ENCODE measurements at regions of chr9 and their contacts with region 1.

Region 1: GRCh38 chr9:21812946-21813568 is 10.6 kb downstream of the MTAP start:
- DNase-seq: peak; percentile 80
- ATAC-seq: peak; percentile 35
- H3K4me3 Mint-ChIP-seq: no peak overlapping the region
- H3K27ac Mint-ChIP-seq: peak overlapping the region; percentile 55
- H3K4me1 Mint-ChIP-seq: peaks cover 53% of the 10 kb centered on the region
- H3K27me3 Mint-ChIP-seq: no peaks in the 10 kb centered on the region

Region 2: DNA sequence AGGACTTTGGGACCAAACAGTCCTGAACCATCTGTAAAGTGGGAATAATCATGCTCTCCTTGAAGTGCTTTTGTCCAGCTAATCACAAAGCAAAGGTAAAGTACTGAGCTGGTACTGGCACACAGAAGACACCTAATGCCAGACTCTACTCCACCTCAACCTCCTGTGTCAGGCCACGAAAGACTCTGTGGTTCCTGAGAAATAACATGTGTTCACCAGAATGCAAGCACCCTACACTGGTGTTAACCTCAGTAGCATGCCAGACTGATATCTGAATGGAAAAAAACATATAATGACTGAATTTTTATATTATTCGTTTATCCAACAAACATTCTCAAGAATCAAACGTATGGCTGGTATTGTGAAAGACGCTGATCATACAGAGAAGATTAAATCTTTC is 233.8 kb before region 1 on chr9:
- CTCF ChIA-PET with region 1: no interaction called
- POLR2A ChIA-PET with region 1: no interaction called
- intact Hi-C with region 1: no loop called
- DNase-seq: peak; percentile 33
- ATAC-seq: peak; percentile 52
- H3K4me3 Mint-ChIP-seq: peak overlapping the region; percentile 43
- H3K27ac Mint-ChIP-seq: peak overlapping the region; percentile 74
- H3K4me1 Mint-ChIP-seq: peaks cover 39% of the 10 kb centered on the region
- H3K27me3 Mint-ChIP-seq: peaks cover 3% of the 10 kb centered on the region

Region 3: DNA sequence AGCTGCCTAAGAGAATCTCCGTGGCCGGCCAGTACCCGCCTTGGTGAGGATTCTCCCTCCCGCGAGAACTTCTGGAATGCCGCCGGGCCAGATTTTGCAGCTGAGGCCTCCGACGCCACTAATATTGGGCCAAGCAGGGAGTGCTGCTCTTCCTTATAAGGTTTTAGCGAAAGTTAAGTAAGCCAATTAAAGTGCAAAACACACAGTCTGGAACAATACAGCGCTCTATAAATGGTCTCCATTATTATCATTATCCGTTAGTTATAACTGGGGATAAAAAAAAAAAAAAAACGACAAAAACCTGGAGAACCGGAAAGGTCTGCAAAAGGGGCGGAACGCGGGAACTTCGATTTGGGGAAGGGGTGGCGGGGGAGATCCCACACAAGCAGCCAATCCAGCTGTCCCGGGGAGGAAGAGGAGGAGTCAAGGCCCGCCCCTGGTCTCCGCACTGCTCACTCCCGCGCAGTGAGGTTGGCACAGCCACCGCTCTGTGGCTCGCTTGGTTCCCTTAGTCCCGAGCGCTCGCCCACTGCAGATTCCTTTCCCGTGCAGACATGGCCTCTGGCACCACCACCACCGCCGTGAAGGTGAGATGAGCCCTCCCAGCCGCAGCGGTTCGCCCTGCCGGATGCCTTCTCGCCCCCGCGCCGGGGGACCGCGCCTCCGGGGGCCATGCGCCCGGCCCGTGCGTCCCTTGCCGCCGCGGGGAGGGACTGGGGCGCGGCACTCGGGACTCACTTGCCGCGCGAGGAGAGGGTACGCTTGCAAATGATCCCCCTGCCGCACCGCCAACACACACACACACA is 10.7 kb before region 1 on chr9 and contains the start of gene MTAP:
- CTCF ChIA-PET with region 1: interaction called, 11 read pairs
- POLR2A ChIA-PET with region 1: no interaction called
- intact Hi-C with region 1: no loop called
- DNase-seq: peak; percentile 85
- ATAC-seq: peak; percentile 89
- H3K4me3 Mint-ChIP-seq: peak within 1 kb of the TSS; percentile 99
- H3K27ac Mint-ChIP-seq: peak within 1 kb of the TSS; percentile 99
- H3K4me1 Mint-ChIP-seq: peaks cover 38% of the 10 kb centered on the region
- H3K27me3 Mint-ChIP-seq: peaks cover 8% of the 10 kb centered on the region
- total RNA-seq, gene MTAP: 59.6 to 77.0 TPM

Region 4: DNA sequence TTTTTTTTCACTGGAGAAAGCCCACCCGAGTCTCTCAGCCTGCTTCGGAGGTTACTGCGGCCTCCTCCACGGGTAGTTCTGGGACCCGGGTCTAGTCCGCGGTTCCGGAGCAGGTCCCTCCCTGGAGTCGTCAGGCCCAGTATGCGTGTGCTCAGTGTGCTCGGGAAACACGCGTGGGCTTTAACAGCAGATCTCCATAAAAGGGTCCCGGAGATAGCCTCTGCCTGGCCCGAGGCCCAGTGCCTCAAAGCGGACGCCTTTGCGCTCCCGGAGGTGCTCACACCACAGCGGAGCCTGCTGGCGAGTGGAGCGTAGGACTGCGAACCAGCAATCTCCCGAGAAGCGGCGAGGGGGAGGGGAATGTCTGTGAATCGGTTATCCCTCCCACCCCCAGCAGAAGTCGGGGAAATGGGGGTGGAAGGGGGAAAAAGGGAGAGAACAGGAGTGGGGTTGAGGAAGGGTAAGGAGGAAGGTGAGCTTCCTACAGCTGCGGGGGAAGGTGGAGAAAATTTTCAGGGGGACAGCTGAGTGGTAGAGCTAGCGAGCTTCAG is 152.4 kb after region 1 on chr9:
- CTCF ChIA-PET with region 1: interaction called, 4 read pairs
- POLR2A ChIA-PET with region 1: no interaction called
- intact Hi-C with region 1: loop called (anchors 1 to 2 kb)
- DNase-seq: peak; percentile 75
- ATAC-seq: peak; percentile 84
- H3K4me3 Mint-ChIP-seq: peak overlapping the region; percentile 53
- H3K27ac Mint-ChIP-seq: peak overlapping the region; percentile 5
- H3K4me1 Mint-ChIP-seq: peaks cover 24% of the 10 kb centered on the region
- H3K27me3 Mint-ChIP-seq: peaks cover 85% of the 10 kb centered on the region

Region 5: GRCh38 chr9:22037954-22038690 is 225.1 kb after region 1 on chr9:
- CTCF ChIA-PET with region 1: interaction called, 40 read pairs
- POLR2A ChIA-PET with region 1: no interaction called
- intact Hi-C with region 1: loop called (anchors 1 kb)
- DNase-seq: no peak
- ATAC-seq: no peak
- H3K4me3 Mint-ChIP-seq: no peak overlapping the region
- H3K27ac Mint-ChIP-seq: no peak overlapping the region
- H3K4me1 Mint-ChIP-seq: peaks cover 5% of the 10 kb centered on the region
- H3K27me3 Mint-ChIP-seq: peaks cover 14% of the 10 kb centered on the region

Region 6: GRCh38 chr9:22079873-22080341 is 266.9 kb after region 1 on chr9:
- CTCF ChIA-PET with region 1: interaction called, 8 read pairs
- POLR2A ChIA-PET with region 1: no interaction called
- intact Hi-C with region 1: loop called in 1 of 2 experiments (anchors 1 kb)
- DNase-seq: peak; percentile 75
- ATAC-seq: peak; percentile 99
- H3K4me3 Mint-ChIP-seq: no peak overlapping the region
- H3K27ac Mint-ChIP-seq: no peak overlapping the region
- H3K4me1 Mint-ChIP-seq: peaks cover 26% of the 10 kb centered on the region
- H3K27me3 Mint-ChIP-seq: peaks cover 61% of the 10 kb centered on the region

Region 7: DNA sequence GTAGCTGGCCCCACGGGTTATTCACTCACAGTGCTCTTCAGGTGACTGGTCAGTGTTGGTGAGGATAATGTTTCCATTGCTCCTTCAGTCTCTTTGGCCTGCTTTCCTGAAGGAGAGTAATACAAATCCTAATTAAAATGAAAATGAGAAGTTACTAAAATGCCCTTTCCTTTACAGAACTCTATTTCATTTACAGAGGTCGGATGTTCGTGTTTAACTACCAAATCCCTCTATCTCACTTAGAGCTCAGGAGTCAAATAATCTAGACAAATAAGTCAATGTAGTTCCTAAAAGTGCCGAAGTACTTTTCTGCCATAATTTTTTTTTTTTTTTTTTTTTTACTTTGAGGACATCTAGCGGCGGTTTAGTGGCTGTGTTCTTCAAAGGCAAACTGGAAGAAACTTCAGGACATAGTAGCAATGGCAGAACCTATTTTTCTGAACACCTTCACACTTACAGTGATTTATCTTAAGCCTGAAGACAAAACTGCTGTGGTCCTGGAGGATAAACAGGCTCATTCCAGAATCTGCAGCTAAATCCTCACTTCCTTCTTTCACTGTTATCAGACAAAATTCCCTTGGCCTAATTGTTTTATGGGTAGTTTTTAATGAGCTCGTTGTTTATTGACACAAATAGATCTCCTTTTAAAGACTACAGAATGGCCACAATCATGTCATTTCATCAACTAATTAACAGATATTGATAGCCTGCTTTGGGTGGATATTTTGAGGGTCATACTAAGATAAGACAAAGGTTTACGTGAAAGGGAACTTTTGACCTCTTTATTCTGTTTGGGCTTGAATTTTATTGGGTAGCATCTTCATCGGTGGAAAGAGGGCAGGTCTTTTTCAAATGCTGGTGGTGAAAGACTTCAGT is 426.0 kb after region 1 on chr9:
- CTCF ChIA-PET with region 1: interaction called, 17 read pairs
- POLR2A ChIA-PET with region 1: no interaction called
- intact Hi-C with region 1: loop called (anchors 1 kb)
- DNase-seq: no peak
- ATAC-seq: peak; percentile 34
- H3K4me3 Mint-ChIP-seq: no peak overlapping the region
- H3K27ac Mint-ChIP-seq: no peak overlapping the region
- H3K4me1 Mint-ChIP-seq: peaks cover 37% of the 10 kb centered on the region
- H3K27me3 Mint-ChIP-seq: peaks cover 19% of the 10 kb centered on the region

Region 8: DNA sequence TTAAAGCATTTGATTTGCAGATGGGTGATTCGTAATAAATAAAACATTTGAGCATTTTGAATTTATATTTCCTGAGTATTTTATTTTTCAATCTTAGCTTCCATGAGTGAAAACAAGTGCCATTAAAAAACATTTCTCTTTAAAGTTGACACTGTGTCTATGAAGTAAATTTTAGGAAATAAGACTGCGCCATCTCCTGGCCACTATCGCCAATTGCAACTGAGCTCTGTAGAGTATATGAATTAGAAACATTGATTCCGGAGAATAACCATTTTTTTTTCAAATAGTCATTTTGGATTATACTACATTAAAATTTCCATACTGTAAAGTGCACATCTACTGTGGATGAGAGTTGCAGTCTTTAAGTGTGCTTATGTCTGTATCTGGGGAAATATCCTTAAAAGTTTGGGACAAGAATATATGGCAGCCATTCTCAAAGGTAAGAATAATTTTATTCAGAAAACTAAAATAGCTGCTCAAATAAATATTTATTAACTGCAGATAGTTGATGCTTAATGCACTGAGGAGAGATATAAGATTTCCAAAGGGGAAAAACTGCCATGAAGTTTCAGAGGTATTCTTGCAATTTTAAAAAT is 639.5 kb after region 1 on chr9:
- CTCF ChIA-PET with region 1: interaction called, 15 read pairs
- POLR2A ChIA-PET with region 1: no interaction called
- intact Hi-C with region 1: loop called (anchors 1 kb)
- DNase-seq: peak; percentile 68
- ATAC-seq: no peak
- H3K4me3 Mint-ChIP-seq: no peak overlapping the region
- H3K27ac Mint-ChIP-seq: no peak overlapping the region
- H3K4me1 Mint-ChIP-seq: peaks cover 3% of the 10 kb centered on the region
- H3K27me3 Mint-ChIP-seq: peaks cover 37% of the 10 kb centered on the region